GM12878 (cell line): ENCODE measurements at regions of chr9 and their contacts with region 1.

Region 1: DNA sequence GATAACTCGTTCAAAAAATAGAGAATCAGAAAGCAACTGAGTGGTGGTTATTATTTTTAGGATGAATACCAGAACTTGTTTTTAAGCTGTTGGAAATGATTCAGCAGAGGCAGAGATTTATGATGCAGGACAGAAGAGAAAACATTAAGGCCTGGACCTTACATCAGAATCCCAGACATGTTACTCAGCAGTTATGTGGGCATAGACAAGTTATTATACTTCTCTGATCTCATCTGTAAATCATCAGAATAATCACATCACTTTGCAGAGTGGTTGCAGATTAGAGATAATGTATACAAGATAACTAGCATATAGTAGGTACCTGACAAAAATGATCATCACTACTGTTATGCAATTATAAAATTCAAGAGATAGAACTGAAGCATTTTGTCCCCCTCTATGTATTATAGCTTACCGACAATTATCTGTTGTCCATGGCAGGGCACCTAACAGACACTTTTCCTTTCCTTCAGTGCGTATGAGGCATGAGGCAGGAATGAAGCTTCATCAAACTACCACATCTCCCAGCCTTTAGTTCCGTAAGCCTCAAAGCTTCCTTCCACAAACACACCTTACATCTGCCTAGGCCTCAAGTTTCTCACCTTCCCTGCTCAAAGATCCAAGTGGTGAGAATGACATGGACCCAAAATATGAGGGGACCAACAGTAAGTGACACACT is 165.9 kb downstream of the DENND1A start:
- DNase-seq: no peak
- ATAC-seq: no peak
- H3K4me3 ChIP-seq: no peak overlapping the region
- H3K27ac ChIP-seq: no peak overlapping the region
- H3K4me1 ChIP-seq: no peaks in the 10 kb centered on the region
- H3K27me3 ChIP-seq: no peaks in the 10 kb centered on the region
- CTCF ChIP-seq: no peak
- EP300 ChIP-seq: no peak
- POLR2A ChIP-seq: no peak
- RAD21 ChIP-seq: no peak

Region 2: DNA sequence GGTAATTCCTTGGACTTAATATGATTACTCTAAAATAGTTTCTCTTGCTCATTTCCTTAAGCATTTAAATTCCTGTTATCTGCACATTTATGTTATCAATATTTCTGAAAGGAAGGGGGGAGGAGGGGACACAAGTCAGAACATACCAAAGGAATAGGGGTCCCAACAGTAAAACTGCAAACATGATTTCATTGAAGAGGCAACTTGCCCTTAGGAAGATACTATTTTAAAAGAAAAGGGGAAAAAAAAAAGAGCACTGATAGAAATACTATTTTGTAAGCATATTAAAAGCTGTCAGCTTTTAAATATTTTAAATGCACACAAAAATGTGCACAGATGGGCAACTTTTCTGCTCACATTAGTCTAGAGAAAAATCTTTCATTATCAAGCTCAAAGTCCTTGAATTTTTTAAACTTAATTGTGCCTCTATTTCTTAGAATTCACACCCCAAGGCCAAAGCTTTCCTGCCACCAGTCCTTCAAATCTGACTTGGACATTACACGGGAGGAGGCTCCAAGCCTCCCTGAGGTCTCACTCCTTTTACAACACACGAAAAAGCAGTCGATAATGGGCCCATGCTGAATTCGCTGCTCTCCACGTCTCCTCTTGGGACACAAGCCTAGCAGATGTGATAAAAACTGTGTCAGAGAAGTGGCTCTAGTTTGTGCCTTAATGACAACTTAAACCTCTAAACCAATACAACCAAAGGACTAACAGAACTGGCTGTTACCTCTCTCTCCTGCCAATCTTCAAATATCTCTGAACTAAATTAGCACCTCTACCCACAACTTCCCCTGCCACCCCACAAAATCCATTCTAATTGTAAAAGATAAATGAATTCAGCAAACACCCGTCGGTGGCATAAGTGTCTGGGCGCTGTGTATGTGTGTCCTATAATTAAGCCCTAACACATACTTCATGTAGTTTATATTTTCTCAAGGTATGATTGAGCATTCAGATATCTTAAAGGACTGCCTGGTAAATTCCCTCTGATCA is 11.5 kb after region 1 on chr9:
- CTCF ChIA-PET with region 1: interaction called, 8 read pairs
- POLR2A ChIA-PET with region 1: interaction called, 10 read pairs
- RAD21 ChIA-PET with region 1: interaction called, 18 read pairs
- SMC1A ChIA-PET with region 1: interaction called, 44 read pairs
- in situ Hi-C with region 1: no loop called
- intact Hi-C with region 1: no loop called
- DNase-seq: no peak
- ATAC-seq: peak; percentile 64
- H3K4me3 ChIP-seq: no peak overlapping the region
- H3K27ac ChIP-seq: no peak overlapping the region
- H3K4me1 ChIP-seq: peaks cover 3% of the 10 kb centered on the region
- H3K27me3 ChIP-seq: no peaks in the 10 kb centered on the region
- CTCF ChIP-seq: no peak
- EP300 ChIP-seq: no peak
- POLR2A ChIP-seq: no peak
- RAD21 ChIP-seq: no peak